GM12878 (cell line): ENCODE measurements at regions of chr1 and their contacts with region 1.

Region 1: GRCh38 chr1:58528518-58528917 is 18.0 kb downstream of the OMA1 start:
- DNase-seq: no peak
- ATAC-seq: no peak
- H3K4me3 ChIP-seq: no peak overlapping the region
- H3K27ac ChIP-seq: no peak overlapping the region
- H3K4me1 ChIP-seq: no peaks in the 10 kb centered on the region
- H3K27me3 ChIP-seq: no peaks in the 10 kb centered on the region
- CTCF ChIP-seq: no peak
- EP300 ChIP-seq: no peak
- POLR2A ChIP-seq: no peak
- RAD21 ChIP-seq: no peak

Region 2: GRCh38 chr1:58546520-58547308 is 18.2 kb after region 1 on chr1 and contains the start of gene OMA1:
- CTCF ChIA-PET with region 1: interaction called, 13 read pairs
- POLR2A ChIA-PET with region 1: no interaction called
- RAD21 ChIA-PET with region 1: interaction called, 11 read pairs
- SMC1A ChIA-PET with region 1: interaction called, 3 read pairs
- in situ Hi-C with region 1: no loop called
- intact Hi-C with region 1: no loop called
- DNase-seq: peak; percentile 83
- ATAC-seq: peak; percentile 97
- H3K4me3 ChIP-seq: peak within 1 kb of the TSS; percentile 93
- H3K27ac ChIP-seq: peak within 1 kb of the TSS; percentile 67
- H3K4me1 ChIP-seq: no peaks in the 10 kb centered on the region
- H3K27me3 ChIP-seq: no peaks in the 10 kb centered on the region
- CTCF ChIP-seq: peak; percentile 98 to 99 (median 98); a peak in 5 of 6 replicates
- EP300 ChIP-seq: no peak
- POLR2A ChIP-seq: peak; percentile 98
- RAD21 ChIP-seq: peak; percentile 94
- polyA plus RNA-seq, gene OMA1: 48.3 to 53.4 TPM

Region 3: GRCh38 chr1:58710190-58711085 is 181.9 kb after region 1 on chr1:
- CTCF ChIA-PET with region 1: no interaction called
- POLR2A ChIA-PET with region 1: no interaction called
- RAD21 ChIA-PET with region 1: no interaction called
- SMC1A ChIA-PET with region 1: no interaction called
- in situ Hi-C with region 1: no loop called
- intact Hi-C with region 1: no loop called
- DNase-seq: no peak
- ATAC-seq: peak; percentile 50; the same call in 2 of the 3 replicates
- H3K4me3 ChIP-seq: no peak overlapping the region
- H3K27ac ChIP-seq: no peak overlapping the region
- H3K4me1 ChIP-seq: no peaks in the 10 kb centered on the region
- H3K27me3 ChIP-seq: no peaks in the 10 kb centered on the region
- CTCF ChIP-seq: no peak
- EP300 ChIP-seq: no peak
- POLR2A ChIP-seq: no peak
- RAD21 ChIP-seq: no peak